ENCODE measurements at regions of chr10 and their contacts with region 1.

Region 1: DNA sequence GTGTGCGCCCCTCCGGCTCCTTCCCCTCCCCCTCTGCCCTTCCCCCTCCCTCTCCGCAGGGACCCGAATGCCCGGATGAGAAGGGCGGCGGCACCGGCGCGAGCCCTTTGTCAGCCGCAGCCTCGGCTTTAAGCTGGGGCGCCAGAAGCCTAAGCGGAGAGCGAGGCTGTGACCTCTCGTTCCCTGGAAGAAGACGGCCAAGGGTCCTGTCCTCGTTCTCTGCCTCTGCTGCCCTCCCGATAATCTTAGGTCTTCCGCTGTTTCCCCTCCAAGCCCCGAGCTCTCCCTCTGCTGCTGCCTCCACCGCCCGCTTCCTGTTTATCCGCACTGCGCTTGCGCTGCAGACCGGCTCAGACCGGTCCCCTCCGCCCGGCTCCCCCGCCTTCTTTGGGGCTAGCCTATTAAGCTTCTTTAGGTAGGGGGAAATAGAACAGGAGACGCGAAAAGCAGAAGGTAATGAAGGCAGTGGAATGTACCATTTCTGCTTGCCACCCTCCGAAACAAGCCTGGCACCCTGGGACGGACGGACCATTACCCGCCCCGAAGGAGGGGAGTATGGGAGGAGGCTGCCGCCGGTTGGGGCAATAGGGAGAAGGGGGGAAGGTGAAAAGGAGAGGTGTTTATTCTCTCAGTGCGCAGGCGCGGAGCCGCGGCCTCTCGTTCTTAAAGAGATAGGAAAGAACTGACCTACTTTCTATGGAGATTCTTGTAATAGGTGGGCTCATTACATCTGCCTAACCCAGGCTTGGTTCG is at the start of gene OGA:
- DNase-seq: peak; percentile 96 to 99
- H3K4me3 ChIP-seq: peak within 1 kb of the TSS; percentile 83 to 88
- H3K27ac ChIP-seq: peak within 1 kb of the TSS; percentile 87 to 89
- H3K4me1 ChIP-seq: peaks cover 0 to 7% of the 10 kb centered on the region in 2 donors
- H3K27me3 ChIP-seq: no peaks in the 10 kb centered on the region
- CTCF ChIP-seq: no peak
- total RNA-seq, gene OGA: 66.8 TPM

Region 2: DNA sequence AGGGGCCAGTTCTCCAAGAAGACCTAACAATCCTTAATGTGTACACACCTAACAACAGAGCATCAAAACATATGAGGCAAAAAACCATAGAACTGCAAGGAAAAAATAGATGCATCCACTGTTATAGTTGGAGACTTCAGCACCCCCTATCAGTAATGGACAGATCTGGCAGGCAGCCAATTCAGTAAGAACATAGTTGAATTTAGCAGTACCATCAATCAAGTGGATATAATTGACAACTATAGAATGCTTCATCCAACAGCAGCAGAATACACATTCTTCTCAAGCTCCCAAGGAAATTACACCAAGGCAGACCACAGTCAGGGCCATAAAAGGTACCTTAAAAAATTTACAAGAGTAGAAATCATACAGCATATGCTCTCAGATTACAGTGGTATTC is 272.4 kb before region 1 on chr10:
- intact Hi-C with region 1: no loop called
- DNase-seq: no peak
- H3K4me3 ChIP-seq: no peak overlapping the region
- H3K27ac ChIP-seq: no peak overlapping the region
- H3K4me1 ChIP-seq: peaks cover 0 to 8% of the 10 kb centered on the region in 2 donors
- H3K27me3 ChIP-seq: no peaks in the 10 kb centered on the region
- CTCF ChIP-seq: no peak

Region 3: GRCh38 chr10:102055647-102056419 is 237.5 kb after region 1 on chr10 and contains the start of gene ARMH3:
- intact Hi-C with region 1: loop called (anchors 2 kb)
- DNase-seq: peak; percentile 79 to 97
- H3K4me3 ChIP-seq: peak within 1 kb of the TSS; percentile 84 to 85
- H3K27ac ChIP-seq: peak within 1 kb of the TSS; percentile 92 to 93
- H3K4me1 ChIP-seq: peaks cover 0 to 13% of the 10 kb centered on the region in 2 donors
- H3K27me3 ChIP-seq: no peaks in the 10 kb centered on the region
- CTCF ChIP-seq: no peak
- total RNA-seq, gene ARMH3: 4.5 TPM

Region 4: GRCh38 chr10:102120142-102120990 is 302.1 kb after region 1 on chr10 and contains the start of gene LDB1:
- intact Hi-C with region 1: loop called (anchors 5 kb)
- DNase-seq: peak in 1 of 2 donors; percentile 86
- H3K4me3 ChIP-seq: peak within 1 kb of the TSS; percentile 88 to 94
- H3K27ac ChIP-seq: peak within 1 kb of the TSS; percentile 98 to 100
- H3K4me1 ChIP-seq: peaks cover 24 to 37% of the 10 kb centered on the region in 2 donors
- H3K27me3 ChIP-seq: no peaks in the 10 kb centered on the region
- CTCF ChIP-seq: peak in 1 of 3 experiments; percentile 34
- total RNA-seq, gene LDB1: 29.8 TPM

Measured in ascending aorta (tissue), 2 donors.